Naive thymus-derived CD4-positive, alpha-beta T cell (primary cell): ENCODE measurements at regions of chr7 and their contacts with region 1.

Region 1: DNA sequence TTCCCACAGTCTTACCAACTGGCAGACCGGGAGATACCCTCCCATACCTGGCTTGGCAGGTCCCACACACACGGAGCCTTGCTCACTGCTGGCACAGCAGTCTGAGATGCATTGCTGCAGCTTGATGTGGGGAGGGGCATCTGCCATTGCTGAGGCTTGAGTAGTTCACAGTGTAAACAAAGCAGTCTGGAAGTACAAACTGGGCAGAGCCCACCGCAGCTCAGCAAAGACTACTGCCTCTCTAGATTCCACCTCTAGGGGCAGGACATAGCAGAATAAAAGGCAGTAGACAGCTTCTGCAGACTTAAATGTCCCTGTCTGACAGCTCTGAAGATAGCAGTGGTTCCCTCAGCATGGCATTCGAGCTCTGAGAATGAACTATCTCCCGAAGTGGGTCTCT is 69.6 kb upstream of the RELN start:
- DNase-seq: no peak
- ATAC-seq: no peak
- H3K4me3 ChIP-seq: no peak overlapping the region
- H3K4me3 Mint-ChIP-seq: no peak overlapping the region
- H3K27ac ChIP-seq: no peak overlapping the region
- H3K27ac Mint-ChIP-seq: no peak overlapping the region
- H3K4me1 ChIP-seq: no peaks in the 10 kb centered on the region
- H3K4me1 Mint-ChIP-seq: peaks cover 0 to 1% (median 0%) of the 10 kb centered on the region in 7 donors
- H3K27me3 ChIP-seq: no peaks in the 10 kb centered on the region
- H3K27me3 Mint-ChIP-seq: peaks cover 0 to 13% (median 8%) of the 10 kb centered on the region in 5 donors

Region 2: DNA sequence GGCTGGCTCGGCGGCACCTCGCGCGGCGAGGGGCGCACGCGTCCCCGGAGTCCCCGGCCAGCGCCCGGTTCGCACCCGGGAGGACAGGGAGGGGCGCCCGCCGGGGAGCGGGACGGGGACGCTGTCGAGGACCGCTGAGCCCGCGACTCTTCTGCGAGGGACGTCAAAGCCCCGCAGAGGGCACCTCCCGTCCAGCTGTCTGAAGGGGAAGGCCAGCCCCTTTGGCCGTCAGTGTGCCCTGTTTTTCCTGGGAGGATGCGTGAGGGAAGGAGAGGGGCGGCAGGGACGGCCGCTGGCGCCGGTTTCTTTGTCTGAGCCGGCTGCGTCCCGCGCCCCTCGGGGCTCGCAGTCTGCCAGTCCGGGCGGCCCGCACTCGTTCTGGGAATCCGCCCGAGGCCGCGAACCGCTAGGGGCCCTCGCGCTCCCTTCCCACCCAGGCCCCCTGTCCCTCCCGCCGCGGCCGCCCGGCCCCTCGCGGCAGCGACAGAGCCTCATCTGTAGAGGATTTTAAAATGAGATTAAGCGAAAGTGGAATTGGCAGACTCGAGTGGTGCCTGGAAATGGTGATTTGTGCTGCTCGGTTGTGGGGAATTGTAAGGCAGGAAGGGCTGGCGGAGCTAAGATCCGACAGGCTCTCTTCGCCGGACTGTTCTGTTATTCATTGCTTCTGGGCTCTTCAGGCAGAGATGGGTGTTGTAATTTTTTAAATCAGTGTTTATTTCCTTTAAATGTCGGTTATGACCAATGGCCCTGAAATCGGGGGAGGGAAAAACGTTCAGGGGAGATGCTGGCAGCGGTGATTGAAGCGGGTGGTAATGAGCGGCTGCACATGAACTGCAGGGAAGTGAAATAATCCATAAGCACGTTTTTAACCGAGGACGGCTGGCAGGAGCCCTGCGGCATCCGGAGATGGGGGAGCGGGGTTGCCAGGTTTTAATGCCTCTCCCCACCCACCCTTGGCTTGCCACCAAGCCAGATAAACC is 69.0 kb before region 1 on chr7:
- CTCF ChIA-PET with region 1: no interaction called
- POLR2A ChIA-PET with region 1: no interaction called
- intact Hi-C with region 1: loop called in 1 of 2 experiments (anchors 10 kb)
- DNase-seq: peak in 1 of 9 donors; percentile 26
- ATAC-seq: no peak
- H3K4me3 ChIP-seq: no peak overlapping the region
- H3K4me3 Mint-ChIP-seq: peak overlapping the region; percentile 41 to 84 (median 72)
- H3K27ac ChIP-seq: no peak overlapping the region
- H3K27ac Mint-ChIP-seq: no peak overlapping the region
- H3K4me1 ChIP-seq: no peaks in the 10 kb centered on the region
- H3K4me1 Mint-ChIP-seq: peaks cover 3 to 19% (median 13%) of the 10 kb centered on the region in 7 donors
- H3K27me3 ChIP-seq: peaks cover 0 to 2% of the 10 kb centered on the region in 2 donors
- H3K27me3 Mint-ChIP-seq: peaks cover 43 to 61% (median 56%) of the 10 kb centered on the region in 5 donors